Breast epithelium (tissue), 4 donors: ENCODE measurements at regions of chr19 and their contacts with region 1.

Region 1: DNA sequence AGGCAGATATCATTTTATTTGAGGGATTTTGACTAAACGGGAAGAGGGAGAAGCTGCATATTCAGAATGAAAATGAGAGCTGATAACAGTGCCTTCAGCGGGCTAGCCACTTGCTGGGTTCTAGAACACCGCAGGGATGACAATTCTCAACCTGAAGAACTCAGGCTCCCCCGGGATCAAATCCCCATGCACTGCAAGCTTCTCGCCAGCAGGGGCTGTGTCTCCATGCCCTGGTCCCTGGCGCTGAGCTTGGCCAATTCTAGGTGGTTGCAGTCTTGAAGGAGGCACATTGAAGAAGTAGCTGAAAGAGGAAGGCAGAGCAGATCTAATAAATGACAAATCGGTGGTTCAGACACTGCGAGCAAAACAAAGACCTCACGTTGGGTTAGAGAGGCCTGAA is 128.7 kb downstream of the UQCRFS1 start:
- DNase-seq: no peak
- H3K4me3 ChIP-seq: no peak overlapping the region
- H3K27ac ChIP-seq: no peak overlapping the region
- H3K4me1 ChIP-seq: no peaks in the 10 kb centered on the region
- H3K27me3 ChIP-seq: peaks cover 0 to 13% of the 10 kb centered on the region in 2 donors
- CTCF ChIP-seq: no peak
- POLR2A ChIP-seq: no peak

Region 2: GRCh38 chr19:29111576-29111975 is 27.3 kb after region 1 on chr19:
- intact Hi-C with region 1: no loop called
- DNase-seq: no peak
- H3K4me3 ChIP-seq: no peak overlapping the region
- H3K27ac ChIP-seq: no peak overlapping the region
- H3K4me1 ChIP-seq: no peaks in the 10 kb centered on the region
- H3K27me3 ChIP-seq: peaks cover 0 to 7% of the 10 kb centered on the region in 2 donors
- CTCF ChIP-seq: no peak
- POLR2A ChIP-seq: no peak

Region 3: DNA sequence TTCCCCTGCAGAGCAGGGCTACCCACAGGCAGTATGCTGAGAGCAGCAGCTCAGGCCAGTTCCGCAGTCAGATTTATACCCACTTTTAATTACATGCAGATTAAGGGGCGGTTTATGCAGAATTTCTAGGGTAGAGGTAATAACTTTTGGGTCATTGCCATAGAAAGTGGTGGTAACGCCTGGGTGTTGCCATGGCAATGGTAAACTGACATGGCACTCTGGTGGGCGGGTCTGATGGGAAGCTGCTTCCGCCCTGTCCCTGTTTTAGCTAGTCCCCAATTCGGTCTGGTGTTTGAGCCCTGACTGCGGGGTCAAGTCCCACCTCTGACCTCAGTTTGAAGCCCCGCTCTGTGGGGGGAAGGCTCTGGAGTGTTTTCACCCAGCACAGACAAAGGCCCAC is 300.4 kb after region 1 on chr19:
- intact Hi-C with region 1: loop called (anchors 5 kb)
- DNase-seq: peak in 1 of 2 donors; percentile 42
- H3K4me3 ChIP-seq: no peak overlapping the region
- H3K27ac ChIP-seq: no peak overlapping the region
- H3K4me1 ChIP-seq: no peaks in the 10 kb centered on the region
- H3K27me3 ChIP-seq: peaks cover 0 to 4% of the 10 kb centered on the region in 2 donors
- CTCF ChIP-seq: no peak
- POLR2A ChIP-seq: no peak